ENCODE measurements at regions of chr18 and their contacts with region 1.

Region 1: GRCh38 chr18:67217551-67218166 is 298.9 kb downstream of the DSEL start:
- DNase-seq: peak; percentile 43
- CTCF ChIP-seq: peak; percentile 48

Region 2: GRCh38 chr18:67583621-67584020 is 366.0 kb after region 1 on chr18:
- in situ Hi-C with region 1: no loop called
- DNase-seq: no peak
- CTCF ChIP-seq: no peak

Region 3: GRCh38 chr18:67705748-67706147 is 488.1 kb after region 1 on chr18:
- in situ Hi-C with region 1: no loop called
- DNase-seq: no peak
- CTCF ChIP-seq: no peak

Region 4: DNA sequence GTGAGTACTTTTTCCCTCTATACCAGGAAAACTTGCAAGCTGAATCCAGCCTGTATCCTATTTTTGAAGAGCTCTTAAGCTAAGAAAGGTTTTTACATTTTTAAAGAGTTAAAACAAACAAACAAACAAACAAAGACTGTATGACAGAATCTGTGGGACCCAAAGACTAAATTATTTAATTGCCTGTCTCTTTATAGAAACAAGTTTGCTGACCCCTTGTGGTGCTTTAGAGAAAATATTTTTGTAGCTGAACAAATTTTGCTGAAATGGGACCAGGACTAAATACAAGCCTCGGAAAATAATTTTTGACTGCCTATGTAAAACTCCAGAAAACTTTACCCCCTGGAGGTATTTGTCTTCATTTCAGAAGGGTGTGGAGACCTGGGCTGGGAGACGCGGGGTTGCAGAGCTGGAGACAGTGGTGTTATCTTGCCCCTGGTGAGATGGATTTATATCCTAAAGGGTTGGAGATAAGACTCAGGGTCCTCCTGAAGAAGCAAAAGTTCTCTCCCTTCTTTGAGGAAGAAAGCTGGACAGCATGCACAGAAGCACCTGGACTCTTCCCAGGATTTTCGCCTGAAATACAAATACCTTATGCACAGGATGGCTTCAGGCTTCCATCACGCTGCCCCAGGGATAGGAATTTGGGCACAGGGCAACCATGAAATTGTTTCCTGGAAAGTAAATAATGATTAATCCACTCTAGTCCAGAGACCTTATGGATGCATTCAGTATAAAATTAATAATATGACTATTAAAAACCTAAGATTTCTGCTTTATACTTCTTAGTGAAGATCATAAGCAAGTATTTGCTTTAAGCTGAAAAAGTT is 1442.9 kb after region 1 on chr18:
- in situ Hi-C with region 1: loop called (anchors 25 kb)
- DNase-seq: peak; percentile 10
- CTCF ChIP-seq: peak; percentile 18